B cell (primary cell): ENCODE measurements at regions of chr11 and their contacts with region 1.

Region 1: GRCh38 chr11:35138943-35139721 is at the start of gene CD44:
- DNase-seq: peak; percentile 90
- ATAC-seq: peak; percentile 78
- H3K4me3 ChIP-seq: peak within 1 kb of the TSS; percentile 80 to 90 (median 89)
- H3K4me3 Mint-ChIP-seq: peak within 1 kb of the TSS; percentile 96
- H3K27ac ChIP-seq: peak within 1 kb of the TSS; percentile 88 to 94
- H3K27ac Mint-ChIP-seq: peak within 1 kb of the TSS; percentile 99
- H3K4me1 ChIP-seq: peaks cover 44 to 55% of the 10 kb centered on the region in 2 donors
- H3K4me1 Mint-ChIP-seq: peaks cover 48% of the 10 kb centered on the region
- H3K27me3 ChIP-seq: no peaks in the 10 kb centered on the region
- H3K27me3 Mint-ChIP-seq: no peaks in the 10 kb centered on the region
- CTCF ChIP-seq: no peak
- total RNA-seq, gene CD44: 895 and 896 TPM in 2 replicates

Region 2: DNA sequence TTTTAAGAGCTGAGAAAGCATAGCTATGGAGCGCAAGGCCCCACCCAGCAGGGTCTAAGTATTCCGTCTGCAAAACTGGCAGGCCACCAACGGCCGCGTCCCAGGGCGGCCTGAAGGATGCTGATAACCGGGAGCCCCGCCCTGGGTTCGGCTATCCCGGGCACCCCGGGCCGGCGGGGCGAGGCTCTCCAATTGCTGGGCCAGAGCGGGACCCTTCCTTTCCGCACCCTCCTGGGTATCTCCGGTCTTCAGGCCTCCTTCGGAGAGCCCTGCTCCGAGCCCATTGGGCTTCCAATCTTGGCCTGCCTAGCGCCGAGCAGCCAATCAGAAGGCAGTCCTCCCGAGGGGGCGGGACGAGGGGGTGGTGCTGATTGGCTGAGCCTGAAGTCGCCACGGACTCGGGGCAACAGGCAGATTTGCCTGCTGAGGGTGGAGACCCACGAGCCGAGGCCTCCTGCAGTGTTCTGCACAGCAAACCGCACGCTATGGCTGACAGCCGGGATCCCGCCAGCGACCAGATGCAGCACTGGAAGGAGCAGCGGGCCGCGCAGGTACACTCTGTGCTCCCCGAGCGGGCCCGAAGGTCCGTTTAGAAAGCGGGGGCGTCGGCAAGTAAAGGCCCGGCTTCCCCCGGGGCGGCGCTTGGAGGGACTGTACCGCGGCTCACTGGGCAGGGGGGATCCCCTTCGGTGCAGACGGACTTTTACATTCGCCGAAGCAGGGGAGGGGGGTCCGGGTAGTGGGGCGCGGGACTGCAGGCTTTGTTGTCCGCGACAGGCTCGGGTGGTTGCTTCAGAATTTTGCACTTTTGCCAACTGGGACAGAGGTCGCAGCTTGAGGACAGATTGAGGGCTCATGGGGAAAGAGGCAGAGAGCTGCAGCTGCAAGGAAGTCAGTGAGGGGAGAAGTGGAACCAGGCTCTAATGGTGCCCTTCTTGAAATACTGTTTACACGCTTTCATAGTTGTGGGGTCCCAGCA is 700.3 kb before region 1 on chr11 and contains the start of gene CAT:
- CTCF ChIA-PET with region 1: no interaction called
- POLR2A ChIA-PET with region 1: no interaction called
- intact Hi-C with region 1: no loop called
- DNase-seq: peak; percentile 96
- ATAC-seq: peak; percentile 92
- H3K4me3 ChIP-seq: peak within 1 kb of the TSS; percentile 82 to 98 (median 88)
- H3K4me3 Mint-ChIP-seq: peak within 1 kb of the TSS; percentile 99
- H3K27ac ChIP-seq: peak within 1 kb of the TSS; percentile 75 to 85
- H3K27ac Mint-ChIP-seq: peak within 1 kb of the TSS; percentile 98
- H3K4me1 ChIP-seq: peaks cover 27 to 39% of the 10 kb centered on the region in 2 donors
- H3K4me1 Mint-ChIP-seq: peaks cover 44% of the 10 kb centered on the region
- H3K27me3 ChIP-seq: no peaks in the 10 kb centered on the region
- H3K27me3 Mint-ChIP-seq: no peaks in the 10 kb centered on the region
- CTCF ChIP-seq: no peak
- total RNA-seq, gene CAT: 83.2 and 88.8 TPM in 2 replicates

Region 3: GRCh38 chr11:34685864-34686263 is 453.3 kb before region 1 on chr11:
- CTCF ChIA-PET with region 1: no interaction called
- POLR2A ChIA-PET with region 1: no interaction called
- intact Hi-C with region 1: no loop called
- DNase-seq: no peak
- ATAC-seq: no peak
- H3K4me3 ChIP-seq: no peak overlapping the region
- H3K4me3 Mint-ChIP-seq: no peak overlapping the region
- H3K27ac ChIP-seq: no peak overlapping the region
- H3K27ac Mint-ChIP-seq: no peak overlapping the region
- H3K4me1 ChIP-seq: no peaks in the 10 kb centered on the region
- H3K4me1 Mint-ChIP-seq: no peaks in the 10 kb centered on the region
- H3K27me3 ChIP-seq: no peaks in the 10 kb centered on the region
- H3K27me3 Mint-ChIP-seq: no peaks in the 10 kb centered on the region
- CTCF ChIP-seq: no peak

Region 4: GRCh38 chr11:35006389-35007128 is 132.6 kb before region 1 on chr11:
- CTCF ChIA-PET with region 1: interaction called, 10 read pairs
- POLR2A ChIA-PET with region 1: no interaction called
- intact Hi-C with region 1: no loop called
- DNase-seq: peak; percentile 63
- ATAC-seq: peak; percentile 89
- H3K4me3 ChIP-seq: no peak overlapping the region
- H3K4me3 Mint-ChIP-seq: no peak overlapping the region
- H3K27ac ChIP-seq: no peak overlapping the region
- H3K27ac Mint-ChIP-seq: peak overlapping the region; percentile 50
- H3K4me1 ChIP-seq: peaks cover 6 to 10% of the 10 kb centered on the region in 2 donors
- H3K4me1 Mint-ChIP-seq: peaks cover 31% of the 10 kb centered on the region
- H3K27me3 ChIP-seq: no peaks in the 10 kb centered on the region
- H3K27me3 Mint-ChIP-seq: no peaks in the 10 kb centered on the region
- CTCF ChIP-seq: no peak

Region 5: DNA sequence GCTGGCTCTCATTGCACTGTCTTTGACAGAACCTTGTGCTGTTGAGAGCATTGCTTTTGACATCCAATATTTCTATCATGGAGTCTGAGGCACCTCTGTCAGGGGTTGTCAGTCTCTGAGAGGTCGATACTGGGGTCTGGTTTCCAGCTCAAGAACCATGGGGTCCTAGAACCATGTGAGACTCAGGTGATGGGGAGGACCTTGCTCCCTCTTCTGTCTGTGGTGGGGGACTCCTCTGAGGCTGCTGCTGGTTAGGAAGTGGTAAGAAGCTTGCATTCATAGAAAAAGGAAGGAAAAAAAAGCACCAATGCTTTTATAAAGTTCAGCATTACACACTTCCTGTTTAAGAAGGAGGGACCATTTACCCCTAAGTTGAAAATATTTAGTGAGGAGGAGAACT is 92.0 kb before region 1 on chr11:
- CTCF ChIA-PET with region 1: interaction called, 7 read pairs
- POLR2A ChIA-PET with region 1: interaction called, 5 read pairs
- intact Hi-C with region 1: loop called (anchors 1 kb)
- DNase-seq: peak; percentile 85
- ATAC-seq: peak; percentile 53
- H3K4me3 ChIP-seq: no peak overlapping the region
- H3K4me3 Mint-ChIP-seq: peak overlapping the region; percentile 40
- H3K27ac ChIP-seq: peak overlapping the region; percentile 66 to 98
- H3K27ac Mint-ChIP-seq: peak overlapping the region; percentile 95
- H3K4me1 ChIP-seq: peaks cover 56 to 71% of the 10 kb centered on the region in 2 donors
- H3K4me1 Mint-ChIP-seq: peaks cover 69% of the 10 kb centered on the region
- H3K27me3 ChIP-seq: no peaks in the 10 kb centered on the region
- H3K27me3 Mint-ChIP-seq: no peaks in the 10 kb centered on the region
- CTCF ChIP-seq: no peak

Region 6: GRCh38 chr11:35126000-35126878 is 12.9 kb before region 1 on chr11:
- CTCF ChIA-PET with region 1: interaction called, 5 read pairs
- POLR2A ChIA-PET with region 1: interaction called, 5 read pairs
- intact Hi-C with region 1: loop called (anchors 1 kb)
- DNase-seq: peak; percentile 82
- ATAC-seq: peak; percentile 82
- H3K4me3 ChIP-seq: peak overlapping the region in 2 of 5 experiments; percentile 12 to 34
- H3K4me3 Mint-ChIP-seq: peak overlapping the region; percentile 29
- H3K27ac ChIP-seq: peak overlapping the region; percentile 50 to 57
- H3K27ac Mint-ChIP-seq: peak overlapping the region; percentile 74
- H3K4me1 ChIP-seq: peaks cover 49 to 60% of the 10 kb centered on the region in 2 donors
- H3K4me1 Mint-ChIP-seq: peaks cover 69% of the 10 kb centered on the region
- H3K27me3 ChIP-seq: no peaks in the 10 kb centered on the region
- H3K27me3 Mint-ChIP-seq: no peaks in the 10 kb centered on the region
- CTCF ChIP-seq: peak; percentile 38

Region 7: DNA sequence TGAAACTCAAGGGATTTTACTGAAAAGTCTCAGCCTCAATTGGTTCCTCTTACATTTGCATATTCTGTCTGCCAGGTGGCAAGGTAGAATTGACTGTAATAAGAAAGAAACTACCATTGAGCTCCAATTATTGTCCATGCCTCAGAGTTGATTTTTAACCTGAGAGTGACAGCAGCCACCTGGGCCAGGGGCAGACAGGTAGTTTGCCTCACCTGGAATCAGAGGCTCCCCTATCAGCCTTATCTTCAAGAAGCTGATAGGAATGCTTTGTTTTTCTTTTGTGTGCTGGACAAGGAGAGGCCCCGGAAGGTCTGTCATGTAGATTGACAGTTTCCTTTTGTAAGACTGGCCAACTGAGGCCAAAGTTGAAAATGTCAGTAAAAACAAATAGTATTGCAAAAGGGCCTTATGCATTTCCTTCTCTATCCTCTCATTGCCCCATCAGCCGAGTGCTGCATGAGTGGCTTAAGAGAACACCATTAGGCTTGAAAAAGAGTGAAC is 33.9 kb after region 1 on chr11:
- CTCF ChIA-PET with region 1: interaction called, 6 read pairs
- POLR2A ChIA-PET with region 1: interaction called, 4 read pairs
- intact Hi-C with region 1: loop called (anchors 5 kb)
- DNase-seq: peak; percentile 70
- ATAC-seq: peak; percentile 56
- H3K4me3 ChIP-seq: peak overlapping the region in 3 of 5 experiments; percentile 9 to 34 (median 32)
- H3K4me3 Mint-ChIP-seq: peak overlapping the region; percentile 83
- H3K27ac ChIP-seq: peak overlapping the region; percentile 54 to 83
- H3K27ac Mint-ChIP-seq: peak overlapping the region; percentile 94
- H3K4me1 ChIP-seq: peaks cover 77 to 80% of the 10 kb centered on the region in 2 donors
- H3K4me1 Mint-ChIP-seq: peaks cover 83% of the 10 kb centered on the region
- H3K27me3 ChIP-seq: no peaks in the 10 kb centered on the region
- H3K27me3 Mint-ChIP-seq: no peaks in the 10 kb centered on the region
- CTCF ChIP-seq: no peak